ENCODE measurements at regions of chr3 and their contacts with region 1.

Region 1: GRCh38 chr3:39273119-39273518 is 6.7 kb downstream of the CX3CR1 start:
- DNase-seq: no peak
- ATAC-seq: no peak
- H3K4me3 ChIP-seq: no peak overlapping the region
- H3K27ac ChIP-seq: no peak overlapping the region
- H3K4me1 ChIP-seq: peaks cover under 1% of the 10 kb centered on the region
- H3K27me3 ChIP-seq: peaks cover 0 to 3% of the 10 kb centered on the region in 2 experiments; a peak in 1 of 4 replicates
- CTCF ChIP-seq: no peak
- EP300 ChIP-seq: no peak
- POLR2A ChIP-seq: no peak
- RAD21 ChIP-seq: no peak

Region 2: GRCh38 chr3:39255503-39256325 is 17.4 kb before region 1 on chr3:
- CTCF ChIA-PET with region 1: interaction called, 9 read pairs
- POLR2A ChIA-PET with region 1: interaction called, 4 read pairs
- RAD21 ChIA-PET with region 1: interaction called, 6 read pairs
- SMC1A ChIA-PET with region 1: interaction called, 18 read pairs
- in situ Hi-C with region 1: no loop called
- intact Hi-C with region 1: no loop called
- DNase-seq: peak; percentile 90
- ATAC-seq: peak; percentile 97
- H3K4me3 ChIP-seq: peak overlapping the region; percentile 39; the same call in 1 of the 2 replicates
- H3K27ac ChIP-seq: peak overlapping the region; percentile 93
- H3K4me1 ChIP-seq: peaks cover 30% of the 10 kb centered on the region
- H3K27me3 ChIP-seq: no peaks in the 10 kb centered on the region
- CTCF ChIP-seq: no peak
- EP300 ChIP-seq: peak; percentile 61 to 91; a peak in 3 of 4 replicates
- POLR2A ChIP-seq: no peak
- RAD21 ChIP-seq: no peak

Region 3: GRCh38 chr3:39260957-39261356 is 12.2 kb before region 1 on chr3:
- CTCF ChIA-PET with region 1: interaction called, 9 read pairs
- POLR2A ChIA-PET with region 1: interaction called, 4 read pairs
- RAD21 ChIA-PET with region 1: interaction called, 6 read pairs
- SMC1A ChIA-PET with region 1: interaction called, 18 read pairs
- in situ Hi-C with region 1: no loop called
- intact Hi-C with region 1: no loop called
- DNase-seq: peak; percentile 27
- ATAC-seq: peak; percentile 84
- H3K4me3 ChIP-seq: no peak overlapping the region
- H3K27ac ChIP-seq: no peak overlapping the region
- H3K4me1 ChIP-seq: peaks cover 16% of the 10 kb centered on the region
- H3K27me3 ChIP-seq: peaks cover 0 to 6% of the 10 kb centered on the region in 2 experiments; a peak in 2 of 4 replicates
- CTCF ChIP-seq: peak in 2 of 3 experiments; percentile 29 to 38; a peak in 2 of 6 replicates
- EP300 ChIP-seq: no peak
- POLR2A ChIP-seq: no peak
- RAD21 ChIP-seq: peak; percentile 35

Region 4: GRCh38 chr3:39346785-39347585 is 73.9 kb after region 1 on chr3:
- CTCF ChIA-PET with region 1: no interaction called
- POLR2A ChIA-PET with region 1: no interaction called
- RAD21 ChIA-PET with region 1: no interaction called
- SMC1A ChIA-PET with region 1: no interaction called
- in situ Hi-C with region 1: no loop called
- intact Hi-C with region 1: no loop called
- DNase-seq: no peak
- ATAC-seq: peak; percentile 91
- H3K4me3 ChIP-seq: peak overlapping the region; percentile 0; the same call in 1 of the 2 replicates
- H3K27ac ChIP-seq: peak overlapping the region; percentile 61
- H3K4me1 ChIP-seq: peaks cover 17% of the 10 kb centered on the region
- H3K27me3 ChIP-seq: no peaks in the 10 kb centered on the region
- CTCF ChIP-seq: no peak
- EP300 ChIP-seq: no peak
- POLR2A ChIP-seq: no peak
- RAD21 ChIP-seq: no peak

Measured in GM12878 (cell line).